ENCODE measurements at regions of chr9 and their contacts with region 1.

Region 1: DNA sequence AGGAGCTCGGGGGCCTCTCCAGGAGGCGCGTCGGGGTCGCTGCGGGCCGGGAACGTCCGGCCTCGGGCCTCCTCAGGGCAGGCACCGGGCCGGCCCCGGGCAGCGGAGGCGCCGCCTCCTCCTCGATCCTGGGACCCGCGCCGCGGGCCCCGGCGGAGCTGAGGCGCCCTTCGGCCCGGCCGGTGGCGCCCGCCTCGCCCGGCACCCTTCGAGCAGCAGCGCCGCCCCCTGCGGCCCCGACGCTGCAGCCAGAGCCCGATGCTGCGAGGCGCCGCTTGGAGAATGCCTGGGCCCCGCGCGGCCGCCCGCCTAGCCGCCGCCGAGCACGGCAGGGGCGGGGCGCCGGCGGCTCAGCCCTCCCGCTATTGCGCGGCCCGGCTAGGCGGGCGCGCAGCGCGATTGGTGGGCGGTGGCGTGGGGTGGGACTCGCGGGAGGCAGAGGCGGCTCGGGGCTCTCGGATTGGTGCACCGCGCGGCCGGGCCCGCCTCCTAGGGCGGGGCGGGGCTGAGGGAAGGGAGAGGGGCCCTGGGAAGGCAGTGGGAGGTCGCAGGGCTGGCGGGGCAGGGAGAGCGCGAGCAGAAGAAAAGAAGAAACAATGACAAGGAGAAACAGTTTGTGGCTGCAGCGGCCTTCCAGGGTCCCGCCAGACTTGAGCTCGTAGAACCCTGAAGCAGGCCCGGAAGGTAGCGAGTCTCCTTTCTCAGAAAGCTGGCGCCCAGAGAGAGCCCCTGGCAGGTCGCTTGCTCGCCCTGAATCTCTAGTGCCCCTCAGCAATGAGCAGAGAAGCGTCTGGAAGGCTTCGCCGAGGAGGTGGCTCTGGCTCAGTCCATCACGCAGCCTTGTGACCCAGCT is at the start of gene EEIG1:
- DNase-seq: peak; percentile 95 to 99 (median 97)
- ATAC-seq: peak; percentile 89
- H3K4me3 ChIP-seq: peak within 1 kb of the TSS; percentile 73 to 91
- H3K4me3 Mint-ChIP-seq: peak within 1 kb of the TSS; percentile 97
- H3K27ac ChIP-seq: peak within 1 kb of the TSS; percentile 62 to 78
- H3K27ac Mint-ChIP-seq: peak within 1 kb of the TSS; percentile 98
- H3K4me1 ChIP-seq: peaks cover 36% of the 10 kb centered on the region
- H3K4me1 Mint-ChIP-seq: peaks cover 47% of the 10 kb centered on the region
- H3K27me3 ChIP-seq: no peaks in the 10 kb centered on the region
- H3K27me3 Mint-ChIP-seq: no peaks in the 10 kb centered on the region
- CTCF ChIP-seq: no peak
- total RNA-seq, gene EEIG1: 359 to 378 TPM

Region 2: GRCh38 chr9:127943731-127944144 is 37.2 kb before region 1 on chr9:
- CTCF ChIA-PET with region 1: interaction called, 573 read pairs
- POLR2A ChIA-PET with region 1: interaction called, 4 read pairs
- intact Hi-C with region 1: loop called (anchors 5 kb)
- DNase-seq: peak; percentile 49 to 87 (median 78)
- ATAC-seq: peak; percentile 85
- H3K4me3 ChIP-seq: no peak overlapping the region
- H3K4me3 Mint-ChIP-seq: no peak overlapping the region
- H3K27ac ChIP-seq: no peak overlapping the region
- H3K27ac Mint-ChIP-seq: peak overlapping the region; percentile 89
- H3K4me1 ChIP-seq: peaks cover 39% of the 10 kb centered on the region
- H3K4me1 Mint-ChIP-seq: peaks cover 35% of the 10 kb centered on the region
- H3K27me3 ChIP-seq: no peaks in the 10 kb centered on the region
- H3K27me3 Mint-ChIP-seq: no peaks in the 10 kb centered on the region
- CTCF ChIP-seq: peak; percentile 83

Region 3: DNA sequence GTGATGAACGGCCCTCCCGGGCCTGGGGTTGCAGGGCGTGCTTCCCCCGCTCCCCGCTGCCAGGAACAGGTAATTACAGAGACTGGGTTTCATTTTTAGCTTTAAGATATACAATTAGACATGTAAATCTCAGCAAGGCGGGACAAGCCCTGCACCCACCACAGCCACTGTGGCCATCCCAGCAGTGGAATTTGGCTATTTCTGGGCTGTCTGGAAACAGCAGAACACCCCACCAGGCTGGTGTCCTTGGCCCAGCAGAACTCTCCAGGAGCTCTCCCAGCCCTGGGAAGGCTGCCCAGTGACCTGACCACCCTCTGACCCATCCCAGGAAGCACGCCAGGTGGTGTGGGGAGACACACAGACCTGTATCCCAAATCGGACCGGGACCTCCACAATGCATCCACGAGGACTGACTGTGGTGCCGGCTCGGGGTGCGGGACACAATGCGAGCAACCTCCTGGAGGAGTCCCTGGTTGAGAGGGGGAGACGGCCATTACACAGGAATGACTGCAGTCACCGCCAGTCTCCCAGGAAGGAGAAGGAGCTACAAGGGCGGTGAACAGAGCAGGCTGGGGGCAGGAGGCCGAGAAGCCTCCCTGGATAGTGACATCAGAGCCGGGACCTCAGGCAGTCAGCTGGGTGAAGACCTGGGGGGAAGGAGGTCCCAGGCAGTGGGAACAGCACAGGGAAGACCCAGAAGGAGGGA is 17.4 kb before region 1 on chr9:
- CTCF ChIA-PET with region 1: interaction called, 573 read pairs
- POLR2A ChIA-PET with region 1: interaction called, 220 read pairs
- intact Hi-C with region 1: no loop called
- DNase-seq: peak in 1 of 9 experiments; percentile 50
- ATAC-seq: peak; percentile 12
- H3K4me3 ChIP-seq: peak overlapping the region in 1 of 2 experiments; percentile 42
- H3K4me3 Mint-ChIP-seq: peak overlapping the region; percentile 88
- H3K27ac ChIP-seq: peak overlapping the region; percentile 25 to 49
- H3K27ac Mint-ChIP-seq: peak overlapping the region; percentile 99
- H3K4me1 ChIP-seq: peaks cover 100% of the 10 kb centered on the region
- H3K4me1 Mint-ChIP-seq: peaks cover 96% of the 10 kb centered on the region
- H3K27me3 ChIP-seq: no peaks in the 10 kb centered on the region
- H3K27me3 Mint-ChIP-seq: no peaks in the 10 kb centered on the region
- CTCF ChIP-seq: no peak

Region 4: DNA sequence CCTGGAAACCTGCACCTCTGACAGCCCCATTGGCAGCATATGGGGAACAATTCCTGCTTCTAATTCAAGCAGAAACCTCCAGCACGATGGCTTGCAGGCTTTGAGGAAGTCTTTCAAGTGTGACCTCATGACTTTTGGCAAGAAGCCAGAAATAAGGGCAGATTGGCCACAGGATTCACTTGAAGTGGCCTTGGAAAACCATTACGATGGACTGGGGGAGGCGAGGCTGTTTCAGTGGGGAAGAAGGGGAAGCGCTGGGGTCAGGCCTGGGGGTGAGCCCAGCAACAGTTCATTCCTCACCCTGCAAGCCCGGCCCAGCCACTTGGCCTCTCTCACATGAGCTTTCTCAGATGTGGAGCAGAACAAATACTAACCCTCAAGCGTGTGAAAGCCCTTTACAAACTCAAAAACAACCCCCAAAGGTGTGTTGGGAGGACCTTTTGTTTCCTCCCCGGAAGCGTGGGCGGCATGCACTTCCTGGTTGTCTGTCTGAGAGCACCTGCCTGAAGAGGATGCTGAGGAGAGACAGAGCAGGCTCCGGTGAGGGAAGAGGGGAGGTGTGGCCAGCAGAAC is 26.7 kb after region 1 on chr9:
- CTCF ChIA-PET with region 1: interaction called, 11 read pairs
- POLR2A ChIA-PET with region 1: interaction called, 58 read pairs
- intact Hi-C with region 1: loop called (anchors 1 kb)
- DNase-seq: peak; percentile 82 to 98 (median 92)
- ATAC-seq: peak; percentile 88
- H3K4me3 ChIP-seq: peak overlapping the region in 1 of 2 experiments; percentile 46
- H3K4me3 Mint-ChIP-seq: peak overlapping the region; percentile 73
- H3K27ac ChIP-seq: peak overlapping the region; percentile 63 to 68
- H3K27ac Mint-ChIP-seq: peak overlapping the region; percentile 96
- H3K4me1 ChIP-seq: peaks cover 76% of the 10 kb centered on the region
- H3K4me1 Mint-ChIP-seq: peaks cover 75% of the 10 kb centered on the region
- H3K27me3 ChIP-seq: no peaks in the 10 kb centered on the region
- H3K27me3 Mint-ChIP-seq: no peaks in the 10 kb centered on the region
- CTCF ChIP-seq: no peak

Region 5: DNA sequence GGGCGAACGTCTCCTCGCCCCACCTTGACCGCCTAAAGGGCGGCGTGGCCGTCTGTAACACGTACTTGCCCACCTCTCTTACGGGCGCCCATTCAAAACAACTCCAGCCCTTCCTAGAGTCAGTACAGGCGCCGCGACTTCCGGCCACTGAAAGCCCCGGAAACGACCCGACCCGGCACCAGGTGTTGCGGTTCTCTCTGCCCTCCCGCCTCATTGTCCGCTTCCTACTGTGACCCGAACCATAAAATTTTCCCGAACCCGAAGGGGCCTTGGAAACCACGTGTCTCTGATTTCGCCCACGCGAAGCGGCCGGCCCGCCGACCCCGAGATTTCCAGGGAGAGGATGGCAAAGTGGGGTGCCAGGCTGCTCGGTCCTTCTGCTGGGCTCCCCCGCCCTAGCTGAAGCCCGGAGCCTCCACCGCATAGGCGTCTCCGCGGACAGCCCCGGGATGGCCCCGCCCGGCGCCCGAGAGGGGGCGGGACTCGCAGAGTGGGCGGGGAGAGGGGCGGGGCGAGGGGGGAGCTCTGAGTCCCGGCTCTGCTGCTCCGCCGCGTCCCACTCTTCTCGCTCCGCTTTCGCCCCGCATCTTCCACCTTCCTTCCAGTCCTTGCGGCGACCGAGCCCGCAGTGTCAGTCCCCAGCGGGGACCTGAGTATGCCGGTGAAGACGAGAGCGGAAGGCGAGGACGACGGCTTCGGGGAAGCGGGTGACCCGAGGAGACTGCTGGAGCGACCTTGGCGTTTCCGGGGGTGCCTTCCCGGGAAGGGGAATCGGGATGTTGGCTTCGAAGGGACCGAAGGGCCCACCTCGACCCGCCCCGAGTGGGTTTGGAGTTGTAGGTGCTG is 147.3 kb after region 1 on chr9:
- CTCF ChIA-PET with region 1: no interaction called
- POLR2A ChIA-PET with region 1: interaction called, 3 read pairs
- intact Hi-C with region 1: loop called in 1 of 2 experiments (anchors 5 kb)
- DNase-seq: peak; percentile 69 to 95 (median 83)
- ATAC-seq: peak; percentile 81
- H3K4me3 ChIP-seq: peak overlapping the region; percentile 99 to 100
- H3K4me3 Mint-ChIP-seq: peak overlapping the region; percentile 99
- H3K27ac ChIP-seq: peak overlapping the region; percentile 99
- H3K27ac Mint-ChIP-seq: peak overlapping the region; percentile 99
- H3K4me1 ChIP-seq: peaks cover 31% of the 10 kb centered on the region
- H3K4me1 Mint-ChIP-seq: peaks cover 38% of the 10 kb centered on the region
- H3K27me3 ChIP-seq: no peaks in the 10 kb centered on the region
- H3K27me3 Mint-ChIP-seq: peaks cover 2% of the 10 kb centered on the region
- CTCF ChIP-seq: no peak

Measured in CD8-positive, alpha-beta T cell (primary cell).